Activated CD4-positive, alpha-beta memory T cell treated with anti-CD3 and anti-CD28 coated beads for 36 hours (primary cell): ENCODE measurements at regions of chr3 and their contacts with region 1.

Region 1: DNA sequence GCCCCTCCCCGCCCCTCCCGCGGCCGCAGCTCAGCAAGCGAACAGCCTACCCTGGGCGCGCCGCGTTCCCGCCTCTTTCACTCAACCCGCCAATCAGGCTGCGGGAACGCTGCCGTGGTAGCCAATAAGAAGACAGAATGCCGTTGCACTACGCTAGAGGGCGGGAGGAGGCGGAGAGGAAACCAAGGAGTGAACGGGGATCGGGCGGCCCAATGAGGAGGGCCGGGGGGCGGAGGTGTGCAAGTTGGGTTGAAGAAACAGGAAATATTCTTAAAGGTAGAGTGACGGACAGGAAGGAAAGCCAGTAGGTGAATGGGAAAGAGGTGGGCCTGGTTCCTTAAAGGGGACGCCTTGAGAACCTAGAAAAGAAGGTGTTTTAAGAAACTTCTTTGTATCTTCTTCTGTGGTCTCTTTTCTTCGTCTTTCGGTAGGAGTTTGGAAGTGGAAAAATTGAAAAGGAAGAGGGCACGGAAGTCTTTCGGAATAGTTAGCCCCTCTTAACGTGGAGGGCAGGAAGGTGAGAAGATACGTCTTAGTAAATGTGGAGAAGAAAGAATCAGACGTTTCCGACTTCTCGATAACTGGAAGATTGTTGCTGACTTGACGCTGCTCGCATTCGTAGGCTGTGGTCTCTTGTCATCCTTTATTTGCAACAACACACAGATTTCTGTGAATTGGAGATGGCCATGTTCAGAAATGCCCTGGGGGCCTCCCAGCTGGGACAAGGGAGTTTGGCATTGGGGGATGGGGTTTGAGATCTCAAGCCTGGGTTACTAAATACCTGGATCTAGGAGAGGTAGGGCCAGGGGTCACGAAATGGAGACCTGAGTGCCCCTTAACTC is 437 bp upstream of the USF3 start:
- DNase-seq: peak; percentile 100
- H3K4me3 Mint-ChIP-seq: no peak overlapping the region
- H3K27ac Mint-ChIP-seq: no peak overlapping the region
- H3K4me1 Mint-ChIP-seq: peaks cover 20% of the 10 kb centered on the region
- H3K27me3 Mint-ChIP-seq: no peaks in the 10 kb centered on the region

Region 2: DNA sequence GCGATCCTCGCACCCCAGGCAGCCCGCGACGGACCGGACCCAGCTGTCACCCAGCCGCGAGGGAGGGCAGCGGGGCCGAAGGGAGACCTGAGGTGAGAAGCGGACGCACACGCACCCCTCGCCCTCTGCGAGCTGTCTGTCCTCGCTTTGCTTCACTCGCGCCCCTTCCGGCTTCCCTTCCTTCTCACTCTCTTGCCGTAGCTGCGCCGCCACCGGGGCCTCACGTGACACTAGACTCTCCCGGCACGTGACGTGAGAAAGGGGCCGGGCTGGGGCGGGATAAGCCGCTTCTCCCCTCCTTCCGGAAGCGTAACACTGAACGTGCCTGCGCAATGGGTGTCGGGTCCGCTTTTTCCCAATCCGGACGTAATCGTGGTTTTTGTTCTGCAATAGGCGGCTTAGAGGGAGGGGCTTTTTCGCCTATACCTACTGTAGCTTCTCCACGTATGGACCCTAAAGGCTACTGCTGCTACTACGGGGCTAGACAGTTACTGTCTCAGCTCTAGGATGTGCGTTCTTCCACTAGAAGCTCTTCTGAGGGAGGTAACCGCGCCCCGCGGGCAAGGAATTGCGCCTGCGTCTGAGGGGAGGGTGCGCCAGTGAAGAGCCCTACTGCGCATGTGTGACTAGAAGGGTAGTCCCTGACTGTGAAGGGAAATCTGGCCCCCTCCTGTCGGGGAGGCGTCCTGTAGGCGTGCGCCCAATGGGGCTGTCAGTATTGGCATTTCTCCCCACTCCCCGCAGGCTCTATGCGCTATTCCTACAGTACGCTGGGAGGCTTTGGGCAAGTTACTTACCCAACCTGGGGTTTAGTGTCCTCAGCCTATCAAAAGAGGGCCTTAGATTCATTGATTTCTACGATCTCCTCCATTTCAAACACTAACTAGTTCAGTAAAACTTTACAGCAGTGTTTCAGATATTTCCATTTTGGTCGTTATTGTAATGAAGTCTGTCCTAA is 1134.9 kb before region 1 on chr3 and contains the starts of genes ATG3 and SLC35A5:
- CTCF ChIA-PET with region 1: no interaction called
- POLR2A ChIA-PET with region 1: no interaction called
- intact Hi-C with region 1: loop called (anchors 1 kb)
- DNase-seq: peak; percentile 99
- H3K4me3 Mint-ChIP-seq: peak within 1 kb of the TSS; percentile 87
- H3K27ac Mint-ChIP-seq: peak within 1 kb of the TSS; percentile 98
- H3K4me1 Mint-ChIP-seq: peaks cover 31% of the 10 kb centered on the region
- H3K27me3 Mint-ChIP-seq: no peaks in the 10 kb centered on the region
- total RNA-seq, gene ATG3: 58.1 to 59.5 TPM
- total RNA-seq, gene SLC35A5: 15.5 to 17.8 TPM

Region 3: DNA sequence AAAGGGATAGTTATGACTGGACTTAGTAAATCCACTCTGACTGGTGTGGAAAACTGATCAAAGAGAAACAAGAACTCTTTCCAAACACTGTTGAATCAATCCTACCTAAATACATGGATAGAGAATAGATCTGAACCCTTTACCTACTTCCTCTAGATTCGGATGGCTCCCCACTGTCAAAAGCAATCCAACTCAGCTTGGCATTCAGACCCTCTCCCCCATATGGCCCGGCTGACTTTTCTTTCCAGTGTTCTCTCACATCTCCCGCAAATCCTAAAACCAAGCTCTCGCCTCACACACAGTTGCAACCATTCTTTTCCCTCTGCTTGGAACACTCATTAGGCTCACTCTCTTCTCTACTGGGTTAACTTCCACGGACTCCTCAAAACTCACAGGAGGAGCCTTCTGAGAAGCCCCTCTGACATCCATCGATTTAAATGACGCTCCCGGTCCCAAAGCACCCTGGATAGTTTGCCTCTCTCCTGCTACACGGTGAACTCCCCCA is 182.6 kb before region 1 on chr3:
- CTCF ChIA-PET with region 1: no interaction called
- POLR2A ChIA-PET with region 1: interaction called, 5 read pairs
- intact Hi-C with region 1: loop called (anchors 1 kb)
- DNase-seq: no peak
- H3K4me3 Mint-ChIP-seq: no peak overlapping the region
- H3K27ac Mint-ChIP-seq: no peak overlapping the region
- H3K4me1 Mint-ChIP-seq: peaks cover 13% of the 10 kb centered on the region
- H3K27me3 Mint-ChIP-seq: peaks cover 18% of the 10 kb centered on the region

Region 4: GRCh38 chr3:113606539-113607218 is 90.2 kb before region 1 on chr3:
- CTCF ChIA-PET with region 1: no interaction called
- POLR2A ChIA-PET with region 1: no interaction called
- intact Hi-C with region 1: loop called (anchors 2 kb)
- DNase-seq: peak; percentile 67
- H3K4me3 Mint-ChIP-seq: no peak overlapping the region
- H3K27ac Mint-ChIP-seq: no peak overlapping the region
- H3K4me1 Mint-ChIP-seq: peaks cover 18% of the 10 kb centered on the region
- H3K27me3 Mint-ChIP-seq: no peaks in the 10 kb centered on the region

Region 5: GRCh38 chr3:113685956-113686754 is 10.7 kb before region 1 on chr3:
- CTCF ChIA-PET with region 1: no interaction called
- POLR2A ChIA-PET with region 1: no interaction called
- intact Hi-C with region 1: no loop called
- DNase-seq: no peak
- H3K4me3 Mint-ChIP-seq: no peak overlapping the region
- H3K27ac Mint-ChIP-seq: no peak overlapping the region
- H3K4me1 Mint-ChIP-seq: no peaks in the 10 kb centered on the region
- H3K27me3 Mint-ChIP-seq: no peaks in the 10 kb centered on the region

Region 6: DNA sequence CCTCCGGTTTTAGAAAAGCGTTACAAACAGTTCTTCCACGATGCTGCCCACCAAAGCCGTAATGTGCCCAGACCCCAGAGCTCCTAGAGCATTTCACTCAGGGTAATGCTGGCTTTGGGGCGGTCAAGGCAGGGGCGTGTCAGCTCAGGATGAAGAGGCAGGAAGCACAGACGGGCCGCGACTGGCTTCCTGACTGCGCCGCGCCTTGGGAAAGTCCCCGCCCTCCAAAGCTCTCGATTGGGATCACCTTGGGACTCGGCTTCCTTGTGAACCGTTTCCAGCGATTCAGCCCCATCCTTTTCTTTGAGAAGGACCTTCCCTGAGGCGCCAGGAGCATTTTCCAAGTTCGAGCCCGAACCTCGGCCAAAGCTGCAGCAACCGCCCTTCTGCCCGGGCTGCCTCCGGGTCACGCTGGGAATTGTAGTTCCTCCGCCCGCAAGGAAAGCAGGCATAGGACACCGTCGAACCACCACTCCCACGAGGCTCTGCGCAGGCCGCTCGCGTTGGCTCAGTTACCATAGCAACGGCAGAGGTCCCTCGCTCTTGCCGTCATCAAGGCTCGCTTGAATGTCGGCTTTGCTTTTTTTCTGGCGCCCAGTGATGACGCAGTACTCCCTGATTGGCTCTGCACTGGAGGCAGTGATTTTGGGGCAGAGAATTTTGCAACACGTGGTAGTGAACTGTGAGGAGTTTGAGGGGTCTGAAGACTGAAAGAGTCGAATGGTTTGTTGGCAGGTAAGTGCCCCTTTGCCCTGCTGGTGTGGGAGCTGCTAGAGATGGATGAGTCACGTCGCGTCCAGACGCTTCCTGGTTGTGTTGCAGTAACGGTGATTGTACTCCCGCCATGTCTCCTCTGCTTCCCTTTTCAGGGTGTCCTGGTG is 359.5 kb after region 1 on chr3 and contains the starts of genes CCDC191 and QTRT2:
- CTCF ChIA-PET with region 1: no interaction called
- POLR2A ChIA-PET with region 1: no interaction called
- intact Hi-C with region 1: loop called (anchors 1 kb)
- DNase-seq: peak; percentile 99
- H3K4me3 Mint-ChIP-seq: peak within 1 kb of the TSS; percentile 94
- H3K27ac Mint-ChIP-seq: peak within 1 kb of the TSS; percentile 89
- H3K4me1 Mint-ChIP-seq: peaks cover 28% of the 10 kb centered on the region
- H3K27me3 Mint-ChIP-seq: no peaks in the 10 kb centered on the region
- total RNA-seq, gene CCDC191: 3.5 TPM
- total RNA-seq, gene QTRT2: 27.2 to 30.7 TPM

Region 7: GRCh38 chr3:114582929-114583328 is 886.0 kb after region 1 on chr3:
- CTCF ChIA-PET with region 1: no interaction called
- POLR2A ChIA-PET with region 1: no interaction called
- intact Hi-C with region 1: no loop called
- DNase-seq: peak; percentile 28
- H3K4me3 Mint-ChIP-seq: no peak overlapping the region
- H3K27ac Mint-ChIP-seq: no peak overlapping the region
- H3K4me1 Mint-ChIP-seq: peaks cover 14% of the 10 kb centered on the region
- H3K27me3 Mint-ChIP-seq: no peaks in the 10 kb centered on the region

Region 8: DNA sequence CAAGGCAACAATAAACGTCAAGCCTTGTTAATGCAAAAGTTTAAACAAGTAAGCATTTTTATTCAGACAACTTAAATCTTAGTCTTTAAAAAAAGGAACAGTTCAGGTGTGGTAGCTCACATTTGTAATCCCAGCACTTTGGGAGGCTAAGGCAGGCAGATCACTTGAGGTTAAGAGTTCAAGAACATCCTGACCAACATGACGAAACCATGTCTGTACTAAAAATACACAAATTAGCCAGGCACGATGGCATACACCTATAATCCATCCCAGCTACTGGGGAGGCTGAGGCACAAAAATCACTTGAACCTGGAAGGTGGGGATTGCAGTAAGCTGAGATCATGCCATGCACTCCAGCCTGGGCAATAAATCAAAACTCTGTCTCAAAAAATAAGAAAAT is 1430.3 kb after region 1 on chr3:
- CTCF ChIA-PET with region 1: no interaction called
- POLR2A ChIA-PET with region 1: no interaction called
- intact Hi-C with region 1: no loop called
- DNase-seq: no peak
- H3K4me3 Mint-ChIP-seq: no peak overlapping the region
- H3K27ac Mint-ChIP-seq: no peak overlapping the region
- H3K4me1 Mint-ChIP-seq: peaks cover 6% of the 10 kb centered on the region
- H3K27me3 Mint-ChIP-seq: no peaks in the 10 kb centered on the region

Region 9: GRCh38 chr3:115147329-115148141 is 1450.7 kb after region 1 on chr3:
- CTCF ChIA-PET with region 1: no interaction called
- POLR2A ChIA-PET with region 1: no interaction called
- intact Hi-C with region 1: loop called (anchors 2 kb)
- DNase-seq: peak; percentile 98
- H3K4me3 Mint-ChIP-seq: peak overlapping the region; percentile 94
- H3K27ac Mint-ChIP-seq: peak overlapping the region; percentile 91
- H3K4me1 Mint-ChIP-seq: peaks cover 23% of the 10 kb centered on the region
- H3K27me3 Mint-ChIP-seq: peaks cover 2% of the 10 kb centered on the region